GM12878 (cell line): ENCODE measurements at regions of chr15 and their contacts with region 1.

Region 1: DNA sequence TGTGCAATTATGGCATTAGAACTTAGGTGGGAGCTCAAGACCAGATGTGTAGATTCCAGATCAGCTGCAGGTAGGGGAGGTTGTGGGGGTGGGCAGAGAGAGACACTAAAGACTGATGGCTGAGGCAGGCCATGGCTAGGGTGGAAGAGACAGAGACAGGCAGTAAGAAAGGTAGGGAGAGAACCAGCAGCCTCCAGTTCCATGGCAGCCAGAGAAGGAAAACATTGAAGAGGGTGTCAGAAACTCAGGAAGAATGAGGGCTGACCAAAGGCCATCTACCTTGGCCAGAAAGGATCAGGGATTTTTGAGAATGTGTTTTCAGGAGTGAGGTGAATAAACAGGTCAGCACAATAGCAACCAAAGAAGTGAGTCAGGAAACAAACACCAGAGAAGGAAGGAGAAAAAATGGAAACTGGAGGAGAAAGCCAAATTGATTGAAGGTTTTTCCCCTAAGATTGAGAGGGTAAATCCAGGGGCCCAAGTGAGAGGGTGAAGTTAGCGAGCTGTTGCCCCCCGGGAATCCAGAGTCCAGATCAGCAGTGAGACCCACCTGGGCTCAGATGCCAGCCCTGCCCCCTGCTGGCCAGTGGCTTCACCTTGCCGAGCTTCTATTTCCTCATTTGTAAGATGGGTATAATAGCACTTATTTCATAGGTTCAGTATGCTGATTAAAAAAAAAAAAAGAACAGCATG is 41.0 kb downstream of the ABHD2 start:
- DNase-seq: no peak
- ATAC-seq: peak; percentile 95
- H3K4me3 ChIP-seq: no peak overlapping the region
- H3K27ac ChIP-seq: no peak overlapping the region
- H3K4me1 ChIP-seq: no peaks in the 10 kb centered on the region
- H3K27me3 ChIP-seq: no peaks in the 10 kb centered on the region
- CTCF ChIP-seq: peak; percentile 68 to 82 (median 81)
- EP300 ChIP-seq: no peak
- POLR2A ChIP-seq: no peak
- RAD21 ChIP-seq: peak; percentile 70

Region 2: DNA sequence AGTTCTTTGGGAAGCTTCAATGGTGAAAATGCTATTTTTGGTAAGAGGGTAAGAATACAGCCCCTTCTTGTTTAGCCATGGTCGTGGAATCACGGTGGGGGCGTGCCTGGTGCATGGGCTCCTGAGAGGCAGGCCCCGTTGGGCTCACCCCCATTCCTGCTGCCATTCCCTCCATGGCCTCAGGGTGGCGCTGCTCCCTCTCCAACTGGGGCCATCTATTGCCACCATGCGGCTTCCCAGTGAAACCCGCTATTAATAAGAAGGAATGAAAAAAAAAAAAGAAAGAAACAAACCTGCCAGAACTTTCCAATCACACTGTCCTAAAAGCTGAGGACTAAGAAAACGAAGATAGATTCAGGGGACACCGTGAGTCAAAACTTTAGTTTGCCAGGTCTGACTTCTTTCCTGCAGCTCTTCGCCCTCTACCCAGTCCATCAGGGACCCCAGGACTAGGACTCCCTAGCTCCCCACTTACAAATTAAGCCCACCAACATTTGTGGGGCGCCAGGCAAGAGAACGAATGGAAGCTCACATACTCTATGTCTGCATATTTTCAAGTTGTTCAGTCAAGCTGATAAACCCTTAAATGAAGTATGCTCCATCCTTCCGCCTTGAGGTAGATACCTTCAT is 71.7 kb before region 1 on chr15:
- CTCF ChIA-PET with region 1: interaction called, 225 read pairs
- POLR2A ChIA-PET with region 1: interaction called, 9 read pairs
- RAD21 ChIA-PET with region 1: interaction called, 105 read pairs
- SMC1A ChIA-PET with region 1: interaction called, 134 read pairs
- in situ Hi-C with region 1: loop called (anchors 5 kb)
- intact Hi-C with region 1: loop called (anchors 1 kb)
- DNase-seq: peak; percentile 15
- ATAC-seq: peak; percentile 99
- H3K4me3 ChIP-seq: no peak overlapping the region
- H3K27ac ChIP-seq: no peak overlapping the region
- H3K4me1 ChIP-seq: no peaks in the 10 kb centered on the region
- H3K27me3 ChIP-seq: no peaks in the 10 kb centered on the region; a peak in 1 of 4 replicates
- CTCF ChIP-seq: peak; percentile 97 to 99 (median 99)
- EP300 ChIP-seq: no peak
- POLR2A ChIP-seq: no peak
- RAD21 ChIP-seq: peak; percentile 98

Region 3: DNA sequence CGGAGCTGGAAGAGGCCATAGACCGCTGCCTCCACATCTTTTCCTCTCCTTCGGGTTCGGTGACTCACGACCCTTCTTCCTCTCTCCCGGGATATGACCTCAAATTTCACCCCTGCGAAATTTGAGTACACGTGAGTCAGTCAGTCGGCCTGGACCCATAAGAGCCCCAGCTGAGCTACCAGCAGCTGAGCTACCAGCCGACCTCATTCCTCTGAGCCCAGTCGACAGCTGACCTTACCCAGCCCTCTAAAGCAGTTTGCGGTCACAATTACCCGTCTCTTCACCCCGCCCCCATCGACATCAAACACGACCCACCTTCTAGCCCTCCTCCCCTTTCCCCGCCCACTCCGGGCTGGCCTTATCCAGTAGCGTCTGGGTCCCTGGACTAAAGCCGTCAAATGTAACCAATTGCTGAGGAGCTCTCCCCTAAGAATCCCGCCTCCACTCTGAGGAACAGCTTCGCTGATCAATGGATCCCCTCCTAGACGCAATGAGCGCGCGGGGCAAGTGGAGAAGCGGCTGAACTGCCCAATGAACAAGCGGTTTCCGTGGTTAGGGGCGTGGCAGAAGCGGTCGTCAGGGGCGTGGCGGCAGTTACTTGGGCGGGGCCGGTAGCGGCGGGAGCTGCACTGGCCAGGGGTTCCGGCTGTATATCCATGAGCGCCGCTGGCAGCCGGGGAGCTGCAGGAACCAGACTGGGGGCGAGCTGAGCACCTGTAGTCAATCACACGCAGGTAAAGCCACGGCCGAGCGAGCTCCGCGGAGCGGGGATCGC is 41.3 kb before region 1 on chr15 and contains the start of gene ABHD2:
- CTCF ChIA-PET with region 1: interaction called, 147 read pairs
- POLR2A ChIA-PET with region 1: interaction called, 8 read pairs
- RAD21 ChIA-PET with region 1: interaction called, 77 read pairs
- SMC1A ChIA-PET with region 1: interaction called, 109 read pairs
- in situ Hi-C with region 1: no loop called
- intact Hi-C with region 1: no loop called
- DNase-seq: peak; percentile 99
- ATAC-seq: peak; percentile 96
- H3K4me3 ChIP-seq: peak within 1 kb of the TSS; percentile 88
- H3K27ac ChIP-seq: peak within 1 kb of the TSS; percentile 56
- H3K4me1 ChIP-seq: no peaks in the 10 kb centered on the region; the same call in 1 of the 2 replicates
- H3K27me3 ChIP-seq: no peaks in the 10 kb centered on the region
- CTCF ChIP-seq: no peak
- EP300 ChIP-seq: 0 out of 4 replicates have a peak, but pooled peaks of 1 of the 2 experiments have one; percentile 28
- POLR2A ChIP-seq: peak; percentile 84
- RAD21 ChIP-seq: no peak
- polyA plus RNA-seq, gene ABHD2: 1.2 to 4.7 TPM

Region 4: GRCh38 chr15:89112341-89112971 is 16.8 kb before region 1 on chr15:
- CTCF ChIA-PET with region 1: interaction called, 65 read pairs
- POLR2A ChIA-PET with region 1: interaction called, 15 read pairs
- RAD21 ChIA-PET with region 1: interaction called, 33 read pairs
- SMC1A ChIA-PET with region 1: interaction called, 72 read pairs
- in situ Hi-C with region 1: no loop called
- intact Hi-C with region 1: no loop called
- DNase-seq: peak; percentile 38
- ATAC-seq: peak; percentile 99
- H3K4me3 ChIP-seq: no peak overlapping the region
- H3K27ac ChIP-seq: peak overlapping the region; percentile 23
- H3K4me1 ChIP-seq: peaks cover 8% of the 10 kb centered on the region; the same call in 1 of the 2 replicates
- H3K27me3 ChIP-seq: no peaks in the 10 kb centered on the region
- CTCF ChIP-seq: no peak
- EP300 ChIP-seq: peak; percentile 66 to 74; a peak in 3 of 4 replicates
- POLR2A ChIP-seq: no peak
- RAD21 ChIP-seq: no peak

Region 5: GRCh38 chr15:89171136-89172072 is 42.1 kb after region 1 on chr15:
- CTCF ChIA-PET with region 1: interaction called, 38 read pairs
- POLR2A ChIA-PET with region 1: interaction called, 4 read pairs
- RAD21 ChIA-PET with region 1: interaction called, 13 read pairs
- SMC1A ChIA-PET with region 1: interaction called, 27 read pairs
- in situ Hi-C with region 1: no loop called
- intact Hi-C with region 1: no loop called
- DNase-seq: no peak
- ATAC-seq: peak; percentile 22; the same call in 1 of the 3 replicates
- H3K4me3 ChIP-seq: no peak overlapping the region
- H3K27ac ChIP-seq: no peak overlapping the region
- H3K4me1 ChIP-seq: peaks cover 18% of the 10 kb centered on the region
- H3K27me3 ChIP-seq: no peaks in the 10 kb centered on the region
- CTCF ChIP-seq: peak; percentile 54 to 68 (median 64)
- EP300 ChIP-seq: no peak
- POLR2A ChIP-seq: no peak
- RAD21 ChIP-seq: peak; percentile 53

Region 6: GRCh38 chr15:89299896-89300295 is 170.6 kb after region 1 on chr15:
- CTCF ChIA-PET with region 1: no interaction called
- POLR2A ChIA-PET with region 1: no interaction called
- RAD21 ChIA-PET with region 1: no interaction called
- SMC1A ChIA-PET with region 1: no interaction called
- in situ Hi-C with region 1: no loop called
- intact Hi-C with region 1: no loop called
- DNase-seq: no peak
- ATAC-seq: no peak
- H3K4me3 ChIP-seq: no peak overlapping the region
- H3K27ac ChIP-seq: no peak overlapping the region
- H3K4me1 ChIP-seq: no peaks in the 10 kb centered on the region
- H3K27me3 ChIP-seq: no peaks in the 10 kb centered on the region
- CTCF ChIP-seq: peak in 2 of 3 experiments; percentile 4 to 28; a peak in 2 of 6 replicates
- EP300 ChIP-seq: no peak
- POLR2A ChIP-seq: no peak
- RAD21 ChIP-seq: peak; percentile 17; the same call in 1 of the 2 replicates